A673 (cell line): ENCODE measurements at regions of chr2 and their contacts with region 1.

Region 1: DNA sequence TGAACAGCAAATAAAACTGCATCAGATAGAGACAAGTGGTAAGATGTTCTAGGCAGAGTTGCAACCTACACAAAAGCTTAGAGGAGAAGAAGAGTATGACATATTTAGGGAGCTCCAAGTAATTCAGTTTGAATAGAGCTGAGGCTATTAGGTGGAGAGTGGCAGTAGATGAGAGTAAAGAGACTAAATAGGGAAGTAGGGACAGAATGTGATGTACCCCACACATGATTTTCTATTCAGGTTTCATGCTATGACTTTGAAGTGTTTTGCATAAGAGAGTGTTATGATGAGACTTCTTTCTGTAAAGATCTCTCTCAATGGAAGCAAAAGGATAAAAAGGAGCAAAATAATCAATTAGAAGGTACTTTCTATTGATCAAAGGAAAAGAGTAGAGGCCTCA is 206.8 kb upstream of the ERBB4 start:
- DNase-seq: no peak
- H3K4me3 ChIP-seq: no peak overlapping the region
- H3K27ac ChIP-seq: no peak overlapping the region
- H3K4me1 ChIP-seq: no peaks in the 10 kb centered on the region
- H3K27me3 ChIP-seq: no peaks in the 10 kb centered on the region
- CTCF ChIP-seq: no peak

Region 2: GRCh38 chr2:212730994-212731393 is 14.4 kb before region 1 on chr2:
- CTCF ChIA-PET with region 1: no interaction called
- POLR2A ChIA-PET with region 1: interaction called, 11 read pairs
- intact Hi-C with region 1: no loop called
- DNase-seq: no peak
- H3K4me3 ChIP-seq: no peak overlapping the region
- H3K27ac ChIP-seq: no peak overlapping the region
- H3K4me1 ChIP-seq: no peaks in the 10 kb centered on the region
- H3K27me3 ChIP-seq: no peaks in the 10 kb centered on the region
- CTCF ChIP-seq: no peak